OCI-LY7 (cell line): ENCODE measurements at regions of chr14 and their contacts with region 1.

Region 1: DNA sequence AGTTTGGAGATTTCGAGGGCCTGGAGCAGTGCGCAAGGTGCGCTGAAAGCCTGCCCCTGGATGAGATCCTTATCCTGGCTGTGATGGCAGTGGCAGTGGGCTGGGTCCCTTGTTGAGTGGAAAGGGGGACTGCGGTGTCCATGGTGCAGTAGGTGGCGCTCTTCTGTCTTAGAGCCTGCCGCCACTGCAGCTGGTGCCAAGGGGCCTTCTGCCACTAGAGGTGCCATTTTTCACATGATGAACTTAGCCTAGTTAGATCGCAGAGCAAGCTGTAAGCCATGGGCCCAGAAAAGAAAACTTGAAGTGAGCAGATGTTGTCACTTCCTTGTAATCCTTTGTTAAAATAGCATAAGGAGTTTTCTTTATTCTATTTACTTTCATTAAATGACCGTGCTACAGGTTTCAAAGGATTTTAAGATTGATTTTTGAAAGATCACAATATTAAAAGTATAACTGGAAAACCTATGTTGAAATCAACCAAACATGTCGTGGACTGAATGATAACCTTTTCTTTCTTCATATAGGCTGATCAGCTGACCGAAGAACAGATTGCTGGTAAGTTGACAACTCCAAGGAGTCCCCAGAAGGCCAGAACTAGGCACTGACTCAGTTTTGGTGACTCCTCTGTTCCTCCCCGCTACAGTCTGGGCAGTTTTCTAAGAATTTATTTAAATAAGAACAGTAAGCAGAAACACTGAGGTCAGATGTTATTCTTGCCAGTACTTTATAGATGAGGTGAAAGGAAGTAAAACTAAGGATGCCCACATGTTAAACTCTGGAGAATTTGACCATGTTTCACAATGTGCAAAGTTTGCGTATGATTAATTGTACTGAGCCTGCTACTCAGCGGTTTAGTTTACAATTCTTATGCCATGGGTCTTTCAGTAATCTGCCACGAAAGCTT is 3.0 kb downstream of the CALM1 start:
- DNase-seq: peak; percentile 93
- H3K4me3 ChIP-seq: peak overlapping the region; percentile 100
- H3K27ac ChIP-seq: no peak overlapping the region
- H3K4me1 ChIP-seq: peaks cover 20% of the 10 kb centered on the region
- CTCF ChIP-seq: peak; percentile 100

Region 2: GRCh38 chr14:90256354-90257131 is 143.2 kb before region 1 on chr14 and contains the start of gene PSMC1:
- CTCF ChIA-PET with region 1: no interaction called
- POLR2A ChIA-PET with region 1: no interaction called
- intact Hi-C with region 1: loop called (anchors 5 kb)
- DNase-seq: peak; percentile 94
- H3K4me3 ChIP-seq: peak within 1 kb of the TSS; percentile 90
- H3K27ac ChIP-seq: peak within 1 kb of the TSS; percentile 53
- H3K4me1 ChIP-seq: peaks cover 28% of the 10 kb centered on the region
- CTCF ChIP-seq: no peak
- total RNA-seq, gene PSMC1: 100 and 117 TPM in 2 replicates

Region 3: DNA sequence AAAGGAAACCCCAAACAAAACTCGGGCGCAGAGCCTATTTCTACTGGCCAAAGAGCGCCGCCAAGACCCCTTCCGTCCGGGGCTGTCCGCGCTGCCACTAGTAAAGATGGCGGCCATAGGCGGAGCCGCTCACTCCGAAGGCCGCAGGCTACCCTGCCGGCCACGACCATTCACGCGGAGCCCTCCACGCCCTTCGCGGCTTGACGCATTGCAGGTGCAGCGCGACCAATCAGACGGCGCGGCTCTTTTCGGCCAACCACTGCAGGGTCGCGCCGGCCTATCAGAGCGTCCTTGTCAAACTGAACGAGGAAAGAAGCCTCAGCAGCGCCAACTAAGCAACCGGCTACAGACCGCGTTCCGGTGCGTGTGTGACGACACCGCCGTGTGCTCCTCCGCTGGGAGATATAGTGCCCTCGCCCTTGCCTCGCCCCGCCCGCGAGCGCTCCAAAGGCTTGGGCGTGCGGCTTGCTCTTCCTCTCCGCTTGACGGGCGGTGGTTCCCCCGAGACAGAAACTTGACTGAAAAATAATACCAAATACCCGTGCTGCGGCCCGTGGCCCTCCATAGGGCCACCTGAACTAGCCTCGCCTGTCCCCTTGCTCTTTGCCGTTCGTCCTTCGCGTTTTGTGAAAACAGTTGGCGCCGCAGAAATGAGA is 16.6 kb before region 1 on chr14:
- CTCF ChIA-PET with region 1: no interaction called
- POLR2A ChIA-PET with region 1: interaction called, 33 read pairs
- intact Hi-C with region 1: loop called (anchors 1 kb)
- DNase-seq: peak; percentile 99
- H3K4me3 ChIP-seq: peak overlapping the region; percentile 76
- H3K27ac ChIP-seq: peak overlapping the region; percentile 79
- H3K4me1 ChIP-seq: peaks cover 29% of the 10 kb centered on the region
- CTCF ChIP-seq: 0 out of 2 replicates have a peak, but pooled peaks have one; percentile 38

Region 4: GRCh38 chr14:90758028-90758889 is 358.5 kb after region 1 on chr14:
- CTCF ChIA-PET with region 1: no interaction called
- POLR2A ChIA-PET with region 1: interaction called, 3 read pairs
- intact Hi-C with region 1: loop called (anchors 1 kb)
- DNase-seq: peak; percentile 93
- H3K4me3 ChIP-seq: peak overlapping the region; percentile 62
- H3K27ac ChIP-seq: no peak overlapping the region
- H3K4me1 ChIP-seq: peaks cover 19% of the 10 kb centered on the region
- CTCF ChIP-seq: peak; percentile 79